A549 (cell line): ENCODE measurements at regions of chr1 and their contacts with region 1.

Region 1: GRCh38 chr1:36134505-36135329 is 9.7 kb upstream of the COL8A2 start:
- DNase-seq: peak; percentile 34 to 68
- ATAC-seq: peak; percentile 77 to 94
- H3K4me3 ChIP-seq: no peak overlapping the region
- H3K27ac ChIP-seq: no peak overlapping the region
- H3K4me1 ChIP-seq: peaks cover 6% of the 10 kb centered on the region
- CTCF ChIP-seq: peak; percentile 58
- EP300 ChIP-seq: no peak
- POLR2A ChIP-seq: no peak
- RAD21 ChIP-seq: peak; percentile 53 to 66; a peak in 4 of 5 replicates

Region 2: DNA sequence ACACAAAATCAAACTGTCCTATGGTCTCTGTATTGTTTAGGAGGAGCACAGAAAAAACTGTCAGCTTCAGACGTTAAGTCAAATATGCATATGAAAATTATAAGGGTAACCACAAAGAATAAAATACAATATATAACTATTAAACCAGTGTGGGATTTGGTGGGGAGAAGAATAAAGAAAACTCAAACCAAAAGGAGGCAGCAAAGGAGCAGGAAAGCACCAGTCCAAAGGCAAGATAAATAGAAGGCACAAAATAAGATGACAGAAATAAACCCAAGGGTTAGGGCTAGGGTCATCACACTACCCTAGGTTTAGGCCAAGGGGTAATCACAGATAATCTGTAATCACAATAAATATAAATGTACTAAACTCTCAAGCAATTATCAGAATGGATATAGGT is 1238.1 kb before region 1 on chr1:
- CTCF ChIA-PET with region 1: no interaction called
- POLR2A ChIA-PET with region 1: no interaction called
- DNase-seq: no peak
- ATAC-seq: no peak
- H3K4me3 ChIP-seq: no peak overlapping the region
- H3K27ac ChIP-seq: no peak overlapping the region
- H3K4me1 ChIP-seq: no peaks in the 10 kb centered on the region
- CTCF ChIP-seq: no peak
- EP300 ChIP-seq: no peak
- POLR2A ChIP-seq: no peak
- RAD21 ChIP-seq: peak in 1 of 2 experiments; percentile 23; a peak in 2 of 5 replicates

Region 3: GRCh38 chr1:35958558-35958957 is 176.2 kb before region 1 on chr1:
- CTCF ChIA-PET with region 1: no interaction called
- POLR2A ChIA-PET with region 1: no interaction called
- DNase-seq: no peak
- ATAC-seq: no peak
- H3K4me3 ChIP-seq: no peak overlapping the region
- H3K27ac ChIP-seq: no peak overlapping the region
- H3K4me1 ChIP-seq: no peaks in the 10 kb centered on the region
- CTCF ChIP-seq: no peak
- EP300 ChIP-seq: no peak
- POLR2A ChIP-seq: no peak
- RAD21 ChIP-seq: no peak

Region 4: GRCh38 chr1:36109041-36109679 is 25.6 kb before region 1 on chr1:
- CTCF ChIA-PET with region 1: interaction called, 147 read pairs
- POLR2A ChIA-PET with region 1: no interaction called
- DNase-seq: no peak
- ATAC-seq: peak in 1 of 2 experiments; percentile 30; a peak in 2 of 6 replicates
- H3K4me3 ChIP-seq: no peak overlapping the region
- H3K27ac ChIP-seq: no peak overlapping the region
- H3K4me1 ChIP-seq: no peaks in the 10 kb centered on the region
- CTCF ChIP-seq: no peak
- EP300 ChIP-seq: no peak
- POLR2A ChIP-seq: no peak
- RAD21 ChIP-seq: no peak

Region 5: GRCh38 chr1:36115200-36115669 is 19.5 kb before region 1 on chr1:
- CTCF ChIA-PET with region 1: interaction called, 49 read pairs
- POLR2A ChIA-PET with region 1: interaction called, 4 read pairs
- DNase-seq: no peak
- ATAC-seq: no peak
- H3K4me3 ChIP-seq: no peak overlapping the region
- H3K27ac ChIP-seq: no peak overlapping the region
- H3K4me1 ChIP-seq: no peaks in the 10 kb centered on the region
- CTCF ChIP-seq: no peak
- EP300 ChIP-seq: no peak
- POLR2A ChIP-seq: no peak
- RAD21 ChIP-seq: no peak